Mammary epithelial cell (primary cell): ENCODE measurements at regions of chr12 and their contacts with region 1.

Region 1: GRCh38 chr12:50924439-50925341 is 27.7 kb upstream of the HIGD1C start:
- DNase-seq: peak; percentile 80
- H3K4me3 ChIP-seq: peak overlapping the region; percentile 39 to 63 (median 61)
- H3K27ac ChIP-seq: no peak overlapping the region
- H3K4me1 ChIP-seq: peaks cover 32% of the 10 kb centered on the region
- H3K27me3 ChIP-seq: no peaks in the 10 kb centered on the region
- CTCF ChIP-seq: no peak

Region 2: DNA sequence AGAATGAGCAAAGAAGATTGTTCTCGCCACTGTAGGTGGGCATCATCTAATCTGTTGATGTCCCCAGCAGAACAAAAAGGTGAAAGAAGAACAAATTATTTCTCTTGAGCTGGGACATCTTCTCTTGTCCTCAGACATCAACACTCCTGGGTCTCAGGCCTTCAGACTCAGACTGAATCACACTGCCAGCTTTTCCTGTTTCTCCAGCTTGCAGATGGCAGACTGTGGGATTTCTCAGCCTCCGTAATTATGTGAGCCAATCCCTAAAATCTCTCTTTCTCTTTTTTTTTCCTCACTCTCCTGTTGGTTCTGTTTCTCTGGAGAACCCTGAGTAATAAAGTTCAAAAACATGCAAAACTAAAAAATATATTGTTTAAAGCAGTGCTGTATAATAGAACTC is 85.6 kb before region 1 on chr12:
- CTCF ChIA-PET with region 1: no interaction called
- dilution Hi-C with region 1: loop called (anchors 5 kb)
- in situ Hi-C with region 1: no loop called
- intact Hi-C with region 1: no loop called
- DNase-seq: peak; percentile 36
- H3K4me3 ChIP-seq: no peak overlapping the region
- H3K27ac ChIP-seq: no peak overlapping the region
- H3K4me1 ChIP-seq: peaks cover 6% of the 10 kb centered on the region
- H3K27me3 ChIP-seq: no peaks in the 10 kb centered on the region
- CTCF ChIP-seq: no peak